ENCODE measurements at regions of chr10 and their contacts with region 1.

Region 1: GRCh38 chr10:52488606-52489485 is 174.8 kb downstream of the DKK1 start:
- DNase-seq: no peak
- H3K4me3 ChIP-seq: no peak overlapping the region
- H3K27ac ChIP-seq: no peak overlapping the region
- H3K4me1 ChIP-seq: no peaks in the 10 kb centered on the region
- H3K27me3 ChIP-seq: no peaks in the 10 kb centered on the region
- CTCF ChIP-seq: peak in 3 of 4 experiments; percentile 11 to 59 (median 30)
- EP300 ChIP-seq: no peak
- POLR2A ChIP-seq: no peak

Region 2: GRCh38 chr10:51001587-51001986 is 1487.3 kb before region 1 on chr10:
- intact Hi-C with region 1: loop called (anchors 5 kb)
- DNase-seq: no peak
- H3K4me3 ChIP-seq: no peak overlapping the region
- H3K27ac ChIP-seq: no peak overlapping the region
- H3K4me1 ChIP-seq: no peaks in the 10 kb centered on the region
- H3K27me3 ChIP-seq: no peaks in the 10 kb centered on the region
- CTCF ChIP-seq: peak; percentile 34 to 71 (median 44)
- EP300 ChIP-seq: no peak
- POLR2A ChIP-seq: no peak

Region 3: GRCh38 chr10:52232561-52233350 is 256.1 kb before region 1 on chr10:
- intact Hi-C with region 1: no loop called
- DNase-seq: no peak
- H3K4me3 ChIP-seq: peak overlapping the region in 1 of 4 donors; percentile 18
- H3K27ac ChIP-seq: no peak overlapping the region
- H3K4me1 ChIP-seq: peaks cover 0 to 9% (median 4%) of the 10 kb centered on the region in 4 donors
- H3K27me3 ChIP-seq: no peaks in the 10 kb centered on the region
- CTCF ChIP-seq: no peak
- EP300 ChIP-seq: no peak
- POLR2A ChIP-seq: no peak

Region 4: DNA sequence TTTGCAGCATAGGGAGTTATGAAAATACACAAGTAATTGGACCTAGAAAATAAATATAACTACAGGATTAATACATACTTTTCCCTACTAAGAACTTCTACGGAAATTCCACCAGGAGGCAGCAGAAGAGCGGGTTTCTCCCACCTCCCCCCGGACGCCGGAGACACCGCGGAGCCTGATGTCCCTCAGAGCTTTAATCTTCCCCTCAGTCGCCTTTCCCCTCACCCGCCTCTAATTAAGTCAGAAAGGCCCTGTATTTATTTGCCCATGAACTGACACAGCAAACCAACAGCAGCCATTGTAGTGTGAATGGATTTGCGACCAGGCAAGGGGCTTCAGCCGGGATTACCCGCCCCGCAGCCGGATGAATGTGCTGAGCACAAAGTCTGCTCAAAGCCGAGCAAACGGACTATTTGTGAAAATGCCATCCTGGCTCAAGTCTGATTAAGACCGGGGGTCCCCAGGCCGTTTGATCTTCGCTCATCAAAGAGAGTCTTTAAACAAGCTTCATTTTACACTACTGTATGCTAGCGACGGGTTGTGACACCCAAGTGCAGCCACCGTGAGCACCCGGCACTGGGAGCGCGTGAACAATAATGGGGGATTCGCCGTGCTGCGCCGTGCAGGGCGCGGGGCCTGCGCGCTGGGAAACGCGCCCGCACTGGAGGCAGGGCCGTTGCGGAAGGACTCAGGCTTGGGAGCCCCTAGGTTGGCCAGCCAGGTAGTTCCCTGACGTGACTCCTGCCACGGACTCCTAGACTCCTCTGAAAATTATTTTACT is 180.4 kb before region 1 on chr10:
- intact Hi-C with region 1: loop called (anchors 5 kb)
- DNase-seq: peak; percentile 64
- H3K4me3 ChIP-seq: peak overlapping the region; percentile 24 to 54 (median 46)
- H3K27ac ChIP-seq: no peak overlapping the region
- H3K4me1 ChIP-seq: peaks cover 0 to 11% (median 8%) of the 10 kb centered on the region in 4 donors
- H3K27me3 ChIP-seq: peaks cover 4 to 19% (median 10%) of the 10 kb centered on the region in 3 donors
- CTCF ChIP-seq: peak in 3 of 4 experiments; percentile 36 to 65 (median 54)
- EP300 ChIP-seq: no peak
- POLR2A ChIP-seq: no peak

Region 5: GRCh38 chr10:52346394-52347326 is 142.2 kb before region 1 on chr10:
- intact Hi-C with region 1: no loop called
- DNase-seq: no peak
- H3K4me3 ChIP-seq: no peak overlapping the region
- H3K27ac ChIP-seq: no peak overlapping the region
- H3K4me1 ChIP-seq: no peaks in the 10 kb centered on the region
- H3K27me3 ChIP-seq: no peaks in the 10 kb centered on the region
- CTCF ChIP-seq: no peak
- EP300 ChIP-seq: no peak
- POLR2A ChIP-seq: no peak

Measured in sigmoid colon (tissue), 7 donors.